Natural killer cell (primary cell): ENCODE measurements at regions of chr17 and their contacts with region 1.

Region 1: GRCh38 chr17:48944519-48945260 is at the start of gene SNF8:
- DNase-seq: peak; percentile 93 to 96
- ATAC-seq: peak; percentile 94 to 95 (median 95)
- H3K4me3 ChIP-seq: peak within 1 kb of the TSS; percentile 99
- H3K4me3 Mint-ChIP-seq: peak within 1 kb of the TSS; percentile 98
- H3K27ac ChIP-seq: peak within 1 kb of the TSS; percentile 90
- H3K27ac Mint-ChIP-seq: peak within 1 kb of the TSS; percentile 89 to 98
- H3K4me1 ChIP-seq: peaks cover 29% of the 10 kb centered on the region
- H3K4me1 Mint-ChIP-seq: peaks cover 17% of the 10 kb centered on the region in 2 donors
- H3K27me3 ChIP-seq: no peaks in the 10 kb centered on the region
- H3K27me3 Mint-ChIP-seq: peaks cover 0 to 6% of the 10 kb centered on the region in 2 donors
- CTCF ChIP-seq: no peak
- total RNA-seq, gene SNF8: 76.9 to 86.0 (median 78.3) TPM

Region 2: DNA sequence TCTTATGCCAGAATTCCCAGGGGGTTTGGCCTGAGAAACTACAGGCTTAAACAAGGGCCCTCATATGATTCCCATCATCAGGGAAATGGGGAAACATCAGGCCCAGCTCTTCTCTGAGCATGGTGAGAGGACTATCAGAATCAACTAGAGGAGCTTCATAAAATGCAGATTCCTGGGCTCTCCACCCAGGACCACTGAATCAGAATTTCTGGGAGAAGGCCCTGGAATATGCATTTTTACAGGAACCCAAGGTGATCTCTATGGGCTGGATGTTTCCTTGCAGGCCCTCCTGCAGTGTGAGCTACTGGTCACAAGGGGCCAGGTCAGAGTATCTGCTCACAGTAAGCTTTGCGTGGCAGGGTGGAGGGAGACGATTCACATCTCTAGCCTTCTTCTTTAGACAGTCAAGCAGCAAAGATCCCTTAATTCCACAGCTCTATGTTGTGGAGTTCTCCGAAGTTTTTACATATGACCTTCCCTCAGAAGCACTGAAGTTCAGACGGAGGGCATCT is 177.4 kb before region 1 on chr17:
- intact Hi-C with region 1: no loop called
- DNase-seq: no peak
- ATAC-seq: no peak
- H3K4me3 ChIP-seq: no peak overlapping the region
- H3K4me3 Mint-ChIP-seq: no peak overlapping the region
- H3K27ac ChIP-seq: no peak overlapping the region
- H3K27ac Mint-ChIP-seq: no peak overlapping the region
- H3K4me1 ChIP-seq: no peaks in the 10 kb centered on the region
- H3K4me1 Mint-ChIP-seq: peaks cover 0 to 4% of the 10 kb centered on the region in 2 donors
- H3K27me3 ChIP-seq: peaks cover 2% of the 10 kb centered on the region
- H3K27me3 Mint-ChIP-seq: peaks cover 19 to 28% of the 10 kb centered on the region in 2 donors
- CTCF ChIP-seq: no peak

Region 3: DNA sequence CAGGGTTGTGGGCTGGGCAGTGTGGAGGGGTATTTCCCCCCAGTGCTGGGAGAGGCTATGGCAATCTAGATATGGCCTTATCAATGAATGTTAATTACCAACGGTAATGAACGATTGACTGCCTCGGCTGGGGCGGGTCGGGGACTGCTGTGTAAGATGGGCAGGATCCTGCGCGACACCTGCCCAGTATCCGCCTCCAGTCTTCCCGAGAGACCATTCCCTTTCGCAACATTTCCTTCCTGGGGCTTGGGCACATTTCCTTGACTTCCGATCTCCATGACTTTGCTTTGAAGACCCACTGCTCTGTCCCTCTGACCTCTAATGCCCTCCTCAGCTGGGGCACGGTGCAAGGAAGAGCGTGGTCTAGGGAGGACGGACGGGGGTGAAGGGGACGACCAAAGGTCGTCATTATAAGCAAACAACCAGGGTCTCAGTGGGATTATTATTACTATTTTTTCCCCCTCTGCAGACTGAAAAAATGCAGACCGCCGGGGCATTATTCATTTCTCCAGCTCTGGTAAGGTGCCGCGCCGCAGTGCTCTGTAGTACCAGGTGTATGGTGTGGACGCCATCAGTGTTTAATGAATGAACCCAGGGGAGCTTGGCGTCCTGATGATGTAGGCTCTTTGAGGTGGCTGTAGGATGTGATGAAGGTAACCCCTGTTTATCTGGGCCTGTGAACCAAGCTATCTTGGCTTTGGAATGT is 51.6 kb before region 1 on chr17:
- intact Hi-C with region 1: loop called (anchors 1 kb)
- DNase-seq: peak in 1 of 2 donors; percentile 45
- ATAC-seq: no peak
- H3K4me3 ChIP-seq: peak overlapping the region; percentile 50
- H3K4me3 Mint-ChIP-seq: peak overlapping the region; percentile 98
- H3K27ac ChIP-seq: peak overlapping the region; percentile 91
- H3K27ac Mint-ChIP-seq: peak overlapping the region; percentile 97 to 98
- H3K4me1 ChIP-seq: peaks cover 17% of the 10 kb centered on the region
- H3K4me1 Mint-ChIP-seq: peaks cover 22 to 24% of the 10 kb centered on the region in 2 donors
- H3K27me3 ChIP-seq: no peaks in the 10 kb centered on the region
- H3K27me3 Mint-ChIP-seq: no peaks in the 10 kb centered on the region
- CTCF ChIP-seq: no peak

Region 4: GRCh38 chr17:49157784-49158183 is 213.1 kb after region 1 on chr17:
- intact Hi-C with region 1: no loop called
- DNase-seq: no peak
- ATAC-seq: no peak
- H3K4me3 ChIP-seq: no peak overlapping the region
- H3K4me3 Mint-ChIP-seq: no peak overlapping the region
- H3K27ac ChIP-seq: no peak overlapping the region
- H3K27ac Mint-ChIP-seq: no peak overlapping the region
- H3K4me1 ChIP-seq: no peaks in the 10 kb centered on the region
- H3K4me1 Mint-ChIP-seq: no peaks in the 10 kb centered on the region
- H3K27me3 ChIP-seq: peaks cover 2% of the 10 kb centered on the region
- H3K27me3 Mint-ChIP-seq: peaks cover 26 to 33% of the 10 kb centered on the region in 2 donors
- CTCF ChIP-seq: no peak